Mammary epithelial cell (primary cell): ENCODE measurements at regions of chrX and their contacts with region 1.

Region 1: GRCh38 chrX:34638116-34638515 is 19.0 kb downstream of the TMEM47 start:
- DNase-seq: no peak
- H3K4me3 ChIP-seq: no peak overlapping the region
- H3K27ac ChIP-seq: no peak overlapping the region
- H3K4me1 ChIP-seq: no peaks in the 10 kb centered on the region
- H3K27me3 ChIP-seq: peaks cover 1% of the 10 kb centered on the region
- CTCF ChIP-seq: peak; percentile 40 to 59

Region 2: GRCh38 chrX:35098419-35098818 is 460.3 kb after region 1 on chrX:
- CTCF ChIA-PET with region 1: no interaction called
- dilution Hi-C with region 1: no loop called
- in situ Hi-C with region 1: no loop called
- intact Hi-C with region 1: loop called (anchors 1 kb)
- DNase-seq: no peak
- H3K4me3 ChIP-seq: no peak overlapping the region
- H3K27ac ChIP-seq: no peak overlapping the region
- H3K4me1 ChIP-seq: no peaks in the 10 kb centered on the region
- H3K27me3 ChIP-seq: no peaks in the 10 kb centered on the region
- CTCF ChIP-seq: peak; percentile 14 to 38

Region 3: GRCh38 chrX:35374116-35374515 is 736.0 kb after region 1 on chrX:
- CTCF ChIA-PET with region 1: no interaction called
- dilution Hi-C with region 1: no loop called
- in situ Hi-C with region 1: no loop called
- intact Hi-C with region 1: loop called (anchors 10 kb)
- DNase-seq: no peak
- H3K4me3 ChIP-seq: no peak overlapping the region
- H3K27ac ChIP-seq: no peak overlapping the region
- H3K4me1 ChIP-seq: no peaks in the 10 kb centered on the region
- H3K27me3 ChIP-seq: peaks cover 2% of the 10 kb centered on the region
- CTCF ChIP-seq: no peak

Region 4: GRCh38 chrX:35726176-35726575 is 1088.1 kb after region 1 on chrX:
- CTCF ChIA-PET with region 1: no interaction called
- dilution Hi-C with region 1: no loop called
- in situ Hi-C with region 1: no loop called
- intact Hi-C with region 1: loop called (anchors 5 kb)
- DNase-seq: peak; percentile 9
- H3K4me3 ChIP-seq: no peak overlapping the region
- H3K27ac ChIP-seq: no peak overlapping the region
- H3K4me1 ChIP-seq: no peaks in the 10 kb centered on the region
- H3K27me3 ChIP-seq: peaks cover 2% of the 10 kb centered on the region
- CTCF ChIP-seq: peak; percentile 35 to 54